PC-9 (cell line): ENCODE measurements at regions of chr16 and their contacts with region 1.

Region 1: DNA sequence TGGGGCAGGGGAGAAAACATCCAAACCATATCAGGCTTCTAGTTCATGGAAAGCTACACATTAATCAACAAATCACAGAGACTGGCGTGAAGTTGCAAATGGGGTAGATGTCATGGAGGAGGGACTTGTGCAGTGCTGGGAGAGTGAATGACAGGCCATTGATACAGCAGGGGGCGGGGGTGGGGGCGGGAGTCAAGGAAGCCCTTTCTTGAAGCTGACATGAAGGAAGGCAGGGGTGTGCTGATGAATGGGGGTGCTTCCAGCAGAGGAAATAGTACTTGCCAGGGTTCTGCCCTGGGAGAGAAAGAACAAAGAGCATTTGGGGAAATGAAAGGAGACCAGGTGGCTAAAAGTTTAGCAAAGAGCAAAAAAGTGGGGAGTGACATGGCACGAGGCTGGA is 269.9 kb downstream of the SHISA9 start:
- DNase-seq: no peak
- H3K4me3 ChIP-seq: no peak overlapping the region
- H3K27ac ChIP-seq: no peak overlapping the region
- H3K4me1 ChIP-seq: peaks cover 13% of the 10 kb centered on the region
- H3K27me3 ChIP-seq: no peaks in the 10 kb centered on the region
- CTCF ChIP-seq: no peak

Region 2: GRCh38 chr16:13426269-13426668 is 255.0 kb after region 1 on chr16:
- CTCF ChIA-PET with region 1: no interaction called
- POLR2A ChIA-PET with region 1: interaction called, 14 read pairs
- intact Hi-C with region 1: no loop called
- DNase-seq: no peak
- H3K4me3 ChIP-seq: no peak overlapping the region
- H3K27ac ChIP-seq: no peak overlapping the region
- H3K4me1 ChIP-seq: no peaks in the 10 kb centered on the region
- H3K27me3 ChIP-seq: no peaks in the 10 kb centered on the region
- CTCF ChIP-seq: no peak